Activated CD8-positive, alpha-beta T cell treated with anti-CD3 and anti-CD28 coated beads for 36 hours (primary cell): ENCODE measurements at regions of chr2 and their contacts with region 1.

Region 1: DNA sequence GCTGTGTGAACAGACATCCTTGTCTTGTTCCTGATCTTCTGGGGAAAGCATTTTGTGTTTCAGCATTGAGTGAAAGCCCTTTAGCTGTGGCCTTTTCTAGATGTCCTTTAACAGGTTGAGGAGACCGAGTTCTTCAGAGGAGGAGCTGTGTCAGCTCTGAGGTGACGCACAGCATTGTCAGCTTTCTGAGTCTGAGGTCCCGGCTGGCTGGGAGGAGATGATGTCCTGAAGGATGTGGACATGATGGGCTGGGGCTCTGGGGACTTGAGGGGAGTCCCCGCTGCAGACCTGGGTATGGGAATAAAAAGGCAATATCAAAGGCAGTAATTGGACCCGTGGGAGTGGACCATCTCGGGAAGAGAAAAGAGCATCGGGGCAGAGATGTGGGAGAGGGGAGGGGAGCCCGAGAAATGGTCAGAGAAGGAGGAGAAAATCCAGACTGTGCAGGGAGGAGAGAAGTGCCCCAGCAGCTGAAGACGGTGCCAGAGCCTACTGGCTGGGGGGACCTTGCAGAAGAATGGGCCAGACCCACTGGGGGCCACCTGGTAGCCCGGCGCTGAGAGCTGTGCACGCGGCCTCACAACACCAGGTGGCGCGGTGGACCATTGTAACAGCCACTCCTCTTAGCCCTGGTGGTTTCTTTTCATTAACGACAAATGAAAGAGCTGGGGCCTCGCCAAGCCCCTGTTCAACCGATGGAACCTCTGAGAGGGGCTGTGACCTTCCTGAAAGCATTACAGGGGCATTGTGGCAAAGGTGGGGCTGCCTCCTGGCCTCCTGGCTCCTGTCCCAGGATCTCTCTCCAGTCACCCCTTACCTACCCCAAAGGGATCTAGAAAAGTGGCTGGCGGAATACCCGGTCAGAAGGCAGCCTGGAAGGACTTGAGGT is 61.6 kb downstream of the ST3GAL5 start:
- DNase-seq: peak; percentile 92
- ATAC-seq: peak; percentile 96
- H3K4me3 Mint-ChIP-seq: no peak overlapping the region
- H3K27ac Mint-ChIP-seq: peak overlapping the region; percentile 28
- H3K4me1 Mint-ChIP-seq: peaks cover 28% of the 10 kb centered on the region
- H3K27me3 Mint-ChIP-seq: peaks cover 2% of the 10 kb centered on the region
- CTCF ChIP-seq: peak; percentile 89

Region 2: DNA sequence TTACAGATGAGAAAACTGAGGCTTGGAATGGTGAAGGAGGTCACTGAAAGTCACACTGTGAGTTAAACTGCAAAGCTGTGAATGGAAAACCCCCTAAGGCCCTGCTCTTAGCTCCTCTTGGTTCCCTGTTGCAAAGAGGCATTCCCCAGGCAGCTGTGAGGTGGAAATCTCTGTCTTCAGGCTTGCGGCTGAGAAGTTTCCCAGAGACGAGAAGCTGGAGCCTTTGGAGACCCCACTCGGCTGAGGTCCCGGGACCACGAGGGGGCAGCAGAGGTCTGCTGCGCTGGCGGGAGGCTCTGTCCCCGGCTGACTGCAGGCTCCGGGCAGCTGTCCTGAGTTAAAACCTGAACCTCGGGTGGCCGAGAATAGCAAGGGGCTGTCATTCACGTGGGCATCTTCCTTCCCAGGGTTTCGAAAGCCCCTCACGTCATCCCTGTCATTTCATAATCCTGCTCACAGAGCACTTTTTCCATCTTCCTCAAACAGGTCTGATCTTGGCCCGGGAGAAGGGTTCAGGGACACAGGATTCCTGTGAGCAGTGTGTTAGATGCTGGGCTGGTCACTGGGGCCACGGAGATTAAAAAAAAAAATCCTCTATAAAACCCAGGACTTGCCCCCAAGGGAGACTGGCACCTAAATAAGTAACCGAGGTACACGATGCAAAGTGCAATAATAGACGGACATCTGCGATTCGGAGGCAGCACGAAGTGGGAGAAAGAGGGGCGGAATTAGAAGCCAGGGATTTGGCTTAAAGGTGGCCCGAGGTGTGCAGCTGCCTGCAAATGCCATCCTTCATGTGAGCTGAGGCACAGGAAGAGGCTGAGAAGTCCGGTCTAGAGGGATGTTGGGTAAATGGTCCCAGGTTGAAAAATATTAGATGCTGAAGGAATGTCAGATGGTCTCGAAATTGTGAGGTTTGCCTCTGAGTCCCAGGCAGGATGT is 98.1 kb before region 1 on chr2:
- CTCF ChIA-PET with region 1: interaction called, 13 read pairs
- POLR2A ChIA-PET with region 1: no interaction called
- intact Hi-C with region 1: no loop called
- DNase-seq: peak; percentile 82
- ATAC-seq: peak; percentile 96
- H3K4me3 Mint-ChIP-seq: no peak overlapping the region
- H3K27ac Mint-ChIP-seq: no peak overlapping the region
- H3K4me1 Mint-ChIP-seq: no peaks in the 10 kb centered on the region
- H3K27me3 Mint-ChIP-seq: peaks cover 7% of the 10 kb centered on the region
- CTCF ChIP-seq: peak; percentile 87

Region 3: DNA sequence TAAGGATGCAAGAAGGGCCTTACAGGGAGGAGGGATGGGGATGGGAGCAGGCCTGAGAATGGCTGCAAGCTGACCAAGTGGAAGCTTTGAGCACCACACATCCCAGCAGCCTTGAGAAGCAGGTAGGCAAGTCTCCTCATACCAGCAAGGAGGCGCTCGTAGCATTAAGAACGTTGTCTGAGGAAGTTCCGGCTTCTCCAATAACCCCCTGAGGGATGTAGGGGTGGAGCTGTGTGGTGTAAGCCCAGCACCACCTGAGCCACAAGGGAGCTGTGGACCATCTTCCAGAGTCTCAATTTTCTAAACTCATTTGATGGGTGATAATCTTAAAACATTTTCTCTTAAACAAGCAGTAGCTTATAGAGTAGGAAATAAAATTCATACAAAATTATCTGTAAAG is 10.9 kb after region 1 on chr2:
- CTCF ChIA-PET with region 1: interaction called, 13 read pairs
- POLR2A ChIA-PET with region 1: interaction called, 6 read pairs
- intact Hi-C with region 1: no loop called
- DNase-seq: no peak
- ATAC-seq: no peak
- H3K4me3 Mint-ChIP-seq: no peak overlapping the region
- H3K27ac Mint-ChIP-seq: no peak overlapping the region
- H3K4me1 Mint-ChIP-seq: peaks cover 19% of the 10 kb centered on the region
- H3K27me3 Mint-ChIP-seq: no peaks in the 10 kb centered on the region
- CTCF ChIP-seq: no peak

Region 4: DNA sequence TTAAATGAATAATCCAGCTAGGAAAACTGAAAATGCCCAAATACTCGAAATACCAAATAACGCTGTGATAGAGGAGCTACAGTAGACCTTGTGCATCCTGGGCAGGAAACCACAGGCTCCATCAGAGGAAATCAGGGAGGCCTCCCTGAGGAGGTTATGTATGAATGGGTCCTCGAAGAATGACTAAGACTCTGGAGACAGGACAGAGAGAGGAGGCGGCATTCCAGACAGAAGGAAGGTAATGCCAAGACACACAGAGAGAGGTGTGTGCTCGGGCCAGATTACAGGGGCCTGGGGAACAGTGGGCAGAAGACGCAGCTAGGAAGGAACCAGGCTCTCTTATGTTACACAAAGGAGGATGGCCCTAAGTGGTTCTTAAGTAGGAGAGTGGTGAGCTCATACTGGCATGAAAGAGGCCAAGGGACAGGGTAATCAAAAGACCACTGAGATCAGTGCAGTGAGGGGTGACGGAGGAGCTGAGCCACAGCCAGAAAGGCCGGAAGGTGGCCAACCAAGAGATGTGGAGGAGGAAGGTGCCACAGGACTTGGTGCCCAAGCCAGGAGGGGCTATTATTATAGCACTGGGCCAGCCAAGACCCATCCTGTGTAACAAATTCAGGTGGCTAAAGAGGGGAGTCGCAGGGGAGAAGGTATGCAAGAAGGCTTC is 51.6 kb after region 1 on chr2:
- CTCF ChIA-PET with region 1: interaction called, 129 read pairs
- POLR2A ChIA-PET with region 1: no interaction called
- intact Hi-C with region 1: no loop called
- DNase-seq: no peak
- ATAC-seq: peak; percentile 7
- H3K4me3 Mint-ChIP-seq: no peak overlapping the region
- H3K27ac Mint-ChIP-seq: no peak overlapping the region
- H3K4me1 Mint-ChIP-seq: peaks cover 61% of the 10 kb centered on the region
- H3K27me3 Mint-ChIP-seq: no peaks in the 10 kb centered on the region
- CTCF ChIP-seq: no peak

Region 5: DNA sequence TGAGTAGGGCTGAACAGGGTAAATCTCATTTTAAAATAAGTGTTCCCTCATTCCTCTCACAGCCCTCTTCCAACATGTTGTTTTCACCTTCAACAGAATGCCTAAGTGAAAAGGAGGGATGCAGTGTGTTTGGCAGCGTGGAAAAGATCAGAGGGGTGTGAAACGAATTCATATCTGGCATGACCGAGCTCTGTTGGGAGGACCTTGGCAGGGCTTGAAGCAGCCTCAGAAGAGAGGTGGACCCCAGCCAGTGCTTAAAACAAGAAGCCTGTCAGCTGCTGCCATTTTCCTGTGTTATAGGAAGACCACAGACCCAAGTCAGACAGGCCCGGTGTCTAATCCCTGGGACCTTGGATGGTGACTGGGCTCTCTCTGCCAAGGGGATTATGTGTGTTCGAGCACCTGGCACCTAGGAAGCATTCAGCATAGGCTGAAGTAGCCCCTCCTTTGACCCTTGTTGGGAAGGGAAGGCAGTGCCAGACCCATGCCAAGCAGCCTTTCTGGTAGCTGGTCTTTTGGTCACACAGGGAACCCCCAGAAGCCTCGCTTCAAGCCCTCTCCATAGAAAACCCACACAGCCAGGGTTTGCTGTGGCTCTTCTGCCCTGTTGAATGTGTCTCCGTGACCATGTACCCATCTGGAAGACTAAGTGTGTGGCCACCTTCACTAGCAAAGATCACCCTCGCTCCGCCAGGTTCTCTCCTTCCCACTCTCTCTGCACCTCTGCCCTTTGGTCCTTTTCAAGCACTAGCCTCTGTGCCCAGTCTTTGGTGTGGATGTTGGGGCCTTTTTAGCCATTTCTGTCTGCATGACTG is 149.1 kb after region 1 on chr2:
- CTCF ChIA-PET with region 1: no interaction called
- POLR2A ChIA-PET with region 1: no interaction called
- intact Hi-C with region 1: no loop called
- DNase-seq: no peak
- ATAC-seq: no peak
- H3K4me3 Mint-ChIP-seq: no peak overlapping the region
- H3K27ac Mint-ChIP-seq: no peak overlapping the region
- H3K4me1 Mint-ChIP-seq: no peaks in the 10 kb centered on the region
- H3K27me3 Mint-ChIP-seq: no peaks in the 10 kb centered on the region
- CTCF ChIP-seq: no peak

Region 6: GRCh38 chr2:86035883-86036668 is 208.8 kb after region 1 on chr2:
- CTCF ChIA-PET with region 1: interaction called, 43 read pairs
- POLR2A ChIA-PET with region 1: interaction called, 3 read pairs
- intact Hi-C with region 1: loop called (anchors 5 kb)
- DNase-seq: peak; percentile 86
- ATAC-seq: peak; percentile 55
- H3K4me3 Mint-ChIP-seq: peak overlapping the region; percentile 63
- H3K27ac Mint-ChIP-seq: peak overlapping the region; percentile 97
- H3K4me1 Mint-ChIP-seq: peaks cover 76% of the 10 kb centered on the region
- H3K27me3 Mint-ChIP-seq: no peaks in the 10 kb centered on the region
- CTCF ChIP-seq: no peak

Region 7: GRCh38 chr2:86068136-86068588 is 240.9 kb after region 1 on chr2:
- CTCF ChIA-PET with region 1: interaction called, 16 read pairs
- POLR2A ChIA-PET with region 1: no interaction called
- intact Hi-C with region 1: no loop called
- DNase-seq: peak; percentile 82
- ATAC-seq: peak; percentile 100
- H3K4me3 Mint-ChIP-seq: no peak overlapping the region
- H3K27ac Mint-ChIP-seq: peak overlapping the region; percentile 59
- H3K4me1 Mint-ChIP-seq: peaks cover 27% of the 10 kb centered on the region
- H3K27me3 Mint-ChIP-seq: no peaks in the 10 kb centered on the region
- CTCF ChIP-seq: no peak